ENCODE measurements at regions of chr3 and their contacts with region 1.

Region 1: GRCh38 chr3:43540624-43541023 is 81.2 kb downstream of the ANO10 start:
- DNase-seq: no peak
- H3K4me3 ChIP-seq: no peak overlapping the region
- H3K27ac ChIP-seq: no peak overlapping the region
- H3K4me1 ChIP-seq: no peaks in the 10 kb centered on the region
- H3K27me3 ChIP-seq: no peaks in the 10 kb centered on the region
- CTCF ChIP-seq: no peak
- POLR2A ChIP-seq: no peak

Region 2: DNA sequence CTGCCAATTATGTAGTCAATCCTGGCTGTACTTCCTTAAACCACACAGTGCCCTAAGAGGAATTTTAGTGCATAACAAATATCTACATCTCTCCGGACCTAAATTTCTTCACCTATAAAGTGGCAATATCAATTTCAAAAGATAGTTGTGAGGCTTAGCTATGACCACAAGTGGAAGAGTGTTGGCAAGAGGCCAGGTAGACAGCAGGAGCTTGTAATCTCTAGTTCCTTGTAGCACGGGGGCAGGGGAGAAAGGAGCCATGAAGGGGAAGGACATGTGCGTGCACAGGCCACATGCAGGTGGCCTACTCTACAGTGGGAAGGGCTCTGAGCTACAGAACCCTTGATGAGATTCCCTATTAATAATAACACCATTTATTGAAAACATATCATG is 419.8 kb after region 1 on chr3:
- intact Hi-C with region 1: no loop called
- DNase-seq: no peak
- H3K4me3 ChIP-seq: no peak overlapping the region
- H3K27ac ChIP-seq: no peak overlapping the region
- H3K4me1 ChIP-seq: no peaks in the 10 kb centered on the region
- H3K27me3 ChIP-seq: peaks cover 14% of the 10 kb centered on the region
- CTCF ChIP-seq: no peak
- POLR2A ChIP-seq: no peak

Region 3: GRCh38 chr3:44198284-44199269 is 658.0 kb after region 1 on chr3:
- intact Hi-C with region 1: loop called (anchors 5 kb)
- DNase-seq: peak; percentile 68
- H3K4me3 ChIP-seq: no peak overlapping the region
- H3K27ac ChIP-seq: no peak overlapping the region
- H3K4me1 ChIP-seq: no peaks in the 10 kb centered on the region
- H3K27me3 ChIP-seq: no peaks in the 10 kb centered on the region
- CTCF ChIP-seq: peak; percentile 32 to 80 (median 71)
- POLR2A ChIP-seq: no peak